ENCODE measurements at regions of chr15 and their contacts with region 1.

Region 1: DNA sequence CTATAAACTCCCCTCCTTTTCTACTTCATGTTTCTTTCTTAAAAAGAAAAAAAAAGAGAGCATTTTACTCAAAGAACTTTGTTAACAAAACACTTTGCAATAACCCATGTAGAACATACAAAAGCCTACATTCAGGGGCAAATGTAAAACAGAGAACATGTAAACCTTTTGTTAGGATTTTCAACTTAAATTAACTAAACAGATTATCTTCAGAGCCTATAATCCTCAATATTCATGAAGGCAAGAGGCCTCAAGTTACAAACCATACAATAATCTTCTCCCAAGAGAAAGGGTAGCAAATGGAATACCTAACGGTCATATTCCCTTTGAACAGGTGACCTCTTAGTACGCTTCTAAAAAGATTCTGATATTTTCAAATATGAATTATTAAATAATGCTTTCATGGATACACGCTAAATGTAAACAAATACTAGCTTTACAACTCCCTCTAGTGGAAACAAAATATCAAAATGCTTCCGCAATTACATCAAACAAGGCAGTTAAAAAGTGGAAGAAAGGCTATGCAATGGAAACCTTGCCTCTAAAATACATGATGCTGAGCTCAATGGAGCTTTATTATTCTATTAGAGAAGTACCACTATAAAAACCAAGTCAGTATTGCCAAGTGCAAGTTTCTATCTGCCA is 9.9 kb downstream of the CEP152 start:
- DNase-seq: peak; percentile 26
- H3K4me3 Mint-ChIP-seq: no peak overlapping the region
- H3K27ac Mint-ChIP-seq: peak overlapping the region; percentile 42
- H3K4me1 Mint-ChIP-seq: peaks cover 14% of the 10 kb centered on the region
- H3K27me3 Mint-ChIP-seq: no peaks in the 10 kb centered on the region
- CTCF ChIP-seq: peak; percentile 42

Region 2: DNA sequence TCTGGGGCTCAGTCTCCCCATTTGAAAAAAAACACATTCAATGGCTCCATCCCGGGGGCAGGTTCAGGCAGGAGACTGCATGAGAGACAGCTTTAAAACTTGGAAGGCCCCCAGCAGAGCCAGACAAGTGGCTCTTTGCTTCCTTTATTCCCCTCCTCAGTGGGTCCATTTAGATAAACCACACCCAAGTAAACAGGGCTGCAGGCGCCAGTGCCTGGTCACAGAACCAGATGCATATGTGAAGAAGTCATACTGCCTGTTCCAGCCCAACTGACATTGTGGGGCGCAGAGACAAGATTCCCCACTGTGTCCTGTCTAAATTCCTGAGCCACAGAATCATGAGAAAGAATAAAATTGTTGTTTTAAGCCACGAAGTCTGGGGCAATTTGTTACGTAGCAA is 164.4 kb before region 1 on chr15:
- CTCF ChIA-PET with region 1: interaction called, 14 read pairs
- POLR2A ChIA-PET with region 1: no interaction called
- intact Hi-C with region 1: no loop called
- DNase-seq: no peak
- H3K4me3 Mint-ChIP-seq: no peak overlapping the region
- H3K27ac Mint-ChIP-seq: no peak overlapping the region
- H3K4me1 Mint-ChIP-seq: peaks cover 15% of the 10 kb centered on the region
- H3K27me3 Mint-ChIP-seq: no peaks in the 10 kb centered on the region
- CTCF ChIP-seq: no peak

Region 3: DNA sequence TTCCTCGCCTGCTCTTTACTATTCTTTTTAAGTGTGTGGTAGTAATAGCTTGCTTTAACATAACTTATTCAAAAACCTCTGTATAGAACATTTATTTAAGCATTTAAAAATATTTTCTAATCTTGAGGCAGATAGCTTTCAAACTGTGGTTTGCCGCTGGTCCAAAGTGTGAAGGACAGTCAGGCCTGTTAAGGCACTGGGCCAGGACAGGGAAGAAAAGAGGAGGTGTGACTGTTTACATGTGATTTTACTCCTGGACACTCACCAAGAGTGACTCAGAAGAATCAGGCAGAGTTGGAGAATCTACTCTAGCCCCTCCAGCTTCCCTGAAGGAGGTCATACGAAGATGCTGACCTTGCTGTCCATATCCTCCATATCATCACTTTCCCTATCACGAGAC is 34.7 kb before region 1 on chr15:
- CTCF ChIA-PET with region 1: interaction called, 11 read pairs
- POLR2A ChIA-PET with region 1: interaction called, 3 read pairs
- intact Hi-C with region 1: no loop called
- DNase-seq: peak; percentile 56
- H3K4me3 Mint-ChIP-seq: no peak overlapping the region
- H3K27ac Mint-ChIP-seq: peak overlapping the region; percentile 27
- H3K4me1 Mint-ChIP-seq: no peaks in the 10 kb centered on the region
- H3K27me3 Mint-ChIP-seq: no peaks in the 10 kb centered on the region
- CTCF ChIP-seq: no peak

Region 4: GRCh38 chr15:49452595-49452994 is 651.7 kb after region 1 on chr15:
- CTCF ChIA-PET with region 1: no interaction called
- POLR2A ChIA-PET with region 1: no interaction called
- intact Hi-C with region 1: no loop called
- DNase-seq: no peak
- H3K4me3 Mint-ChIP-seq: no peak overlapping the region
- H3K27ac Mint-ChIP-seq: no peak overlapping the region
- H3K4me1 Mint-ChIP-seq: no peaks in the 10 kb centered on the region
- H3K27me3 Mint-ChIP-seq: no peaks in the 10 kb centered on the region
- CTCF ChIP-seq: no peak